AG04449 (cell line): ENCODE measurements at regions of chr15 and their contacts with region 1.

Region 1: DNA sequence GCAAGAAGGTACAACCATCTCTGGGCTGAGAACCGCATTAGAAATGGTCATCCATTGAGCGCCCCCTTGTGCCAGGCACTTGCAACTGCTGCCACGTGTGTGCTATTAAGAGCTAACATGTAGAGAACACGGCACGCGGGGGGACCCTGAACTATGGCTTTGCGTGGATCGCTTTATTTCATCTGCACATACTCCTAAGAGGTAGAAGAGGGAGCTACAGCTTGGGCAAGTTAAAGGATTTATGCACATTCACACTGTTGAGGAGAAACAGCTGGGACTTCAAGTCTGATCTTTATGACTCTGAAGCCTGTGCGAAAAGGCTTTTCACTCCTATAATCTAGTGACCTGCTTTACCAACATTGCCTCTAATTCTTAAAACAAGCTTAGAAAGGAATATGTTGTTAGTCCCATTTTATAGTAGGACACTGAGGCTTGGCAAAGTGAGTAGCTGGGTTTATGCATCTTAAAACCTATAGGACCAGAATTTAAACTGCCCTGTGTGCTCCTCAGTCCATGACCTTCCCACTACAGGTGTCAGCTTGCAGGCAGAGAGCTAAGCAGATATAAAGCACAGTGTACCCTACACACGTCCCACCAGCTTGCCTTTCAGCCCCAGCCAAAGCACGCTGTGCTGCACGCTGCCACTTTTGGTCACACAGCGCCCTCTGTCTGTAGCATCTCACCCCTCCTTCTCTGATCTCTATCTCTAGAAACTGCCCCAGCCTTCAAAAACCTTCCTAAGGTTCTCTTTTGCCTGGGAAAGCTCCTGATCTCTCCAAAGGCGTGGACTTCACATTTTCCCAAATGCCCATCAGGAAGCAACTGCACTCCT is 57.8 kb downstream of the STARD5 start:
- DNase-seq: no peak
- H3K4me3 ChIP-seq: peak overlapping the region; percentile 23
- CTCF ChIP-seq: peak; percentile 89

Region 2: DNA sequence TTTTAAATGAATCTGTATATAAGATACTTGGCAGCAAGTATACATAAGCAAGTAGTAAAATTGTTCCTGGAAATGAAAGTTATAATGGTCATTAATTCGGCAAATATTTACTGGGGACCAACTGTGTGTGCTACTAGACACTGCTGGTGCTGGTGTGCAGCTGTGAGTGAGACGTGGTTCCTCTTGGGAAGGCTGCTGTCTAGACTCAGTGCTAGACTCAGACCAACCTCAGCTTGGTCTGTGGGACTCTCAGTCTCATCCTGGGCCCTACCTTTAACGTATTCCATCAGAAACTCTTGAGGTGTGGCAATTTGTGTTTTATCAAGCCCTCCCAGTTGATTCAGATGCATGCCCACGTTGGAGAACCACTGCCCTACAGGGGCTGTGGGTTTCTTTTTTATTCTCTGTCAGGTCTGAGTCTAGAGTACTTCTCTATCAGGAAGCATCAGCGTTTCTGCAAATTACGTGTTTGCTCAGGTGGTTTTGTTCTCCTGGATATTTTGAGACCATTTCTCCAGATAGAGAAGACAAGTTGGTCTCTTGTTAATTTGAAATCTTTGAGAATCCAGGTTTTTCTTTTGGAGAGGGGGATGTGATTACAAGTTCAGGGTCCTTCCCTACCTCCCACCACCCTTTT is 258.6 kb before region 1 on chr15:
- CTCF ChIA-PET with region 1: interaction called, 36 read pairs
- POLR2A ChIA-PET with region 1: no interaction called
- DNase-seq: no peak
- H3K4me3 ChIP-seq: no peak overlapping the region
- CTCF ChIP-seq: no peak

Region 3: GRCh38 chr15:81106560-81106959 is 159.6 kb before region 1 on chr15:
- CTCF ChIA-PET with region 1: interaction called, 1,118 read pairs
- POLR2A ChIA-PET with region 1: interaction called, 5 read pairs
- DNase-seq: peak; percentile 42
- H3K4me3 ChIP-seq: no peak overlapping the region
- CTCF ChIP-seq: peak; percentile 65

Region 4: DNA sequence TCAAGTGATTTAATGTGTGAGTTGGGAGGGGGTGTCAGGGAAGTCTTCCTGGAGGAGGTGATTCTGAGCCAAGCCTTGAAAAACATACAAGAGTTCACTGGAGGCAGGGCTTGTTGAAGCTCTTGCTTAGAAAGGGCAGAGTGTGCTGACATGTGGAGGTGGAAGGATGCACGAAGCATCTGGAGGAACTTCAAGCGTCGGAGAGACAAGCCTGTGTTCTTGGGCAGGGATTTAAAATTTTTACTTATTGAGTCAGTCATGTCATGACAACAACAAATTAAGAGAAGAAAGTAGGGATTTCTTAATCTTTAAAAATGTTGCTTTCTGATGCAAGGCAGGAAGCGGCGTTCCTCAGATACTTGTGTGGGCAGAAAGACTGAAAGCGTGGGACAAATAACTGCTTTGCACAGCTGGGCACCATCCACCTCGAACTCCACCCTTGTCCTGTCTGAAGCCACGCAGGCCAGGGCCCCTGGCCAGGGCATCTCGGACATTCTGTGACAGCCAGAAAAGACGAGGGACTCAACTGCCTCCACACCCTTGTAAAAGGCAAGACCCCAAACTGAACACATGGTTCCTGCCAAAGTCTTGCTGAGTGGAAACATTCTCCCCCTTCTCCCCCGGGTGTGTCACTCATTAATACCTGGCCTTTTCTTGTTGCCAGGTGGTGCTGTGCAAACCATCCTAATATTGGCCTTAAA is 76.4 kb before region 1 on chr15:
- CTCF ChIA-PET with region 1: interaction called, 26 read pairs
- POLR2A ChIA-PET with region 1: no interaction called
- DNase-seq: peak; percentile 73
- H3K4me3 ChIP-seq: no peak overlapping the region; the same call in 1 of the 2 replicates
- CTCF ChIP-seq: no peak

Region 5: GRCh38 chr15:81301815-81302399 is 35.7 kb after region 1 on chr15:
- CTCF ChIA-PET with region 1: interaction called, 28 read pairs
- POLR2A ChIA-PET with region 1: no interaction called
- DNase-seq: no peak
- H3K4me3 ChIP-seq: no peak overlapping the region
- CTCF ChIP-seq: no peak

Region 6: GRCh38 chr15:81400640-81401236 is 134.6 kb after region 1 on chr15:
- CTCF ChIA-PET with region 1: interaction called, 517 read pairs
- POLR2A ChIA-PET with region 1: no interaction called
- DNase-seq: no peak
- H3K4me3 ChIP-seq: no peak overlapping the region
- CTCF ChIP-seq: peak; percentile 65